GM12878 (cell line): ENCODE measurements at regions of chr4 and their contacts with region 1.

Region 1: DNA sequence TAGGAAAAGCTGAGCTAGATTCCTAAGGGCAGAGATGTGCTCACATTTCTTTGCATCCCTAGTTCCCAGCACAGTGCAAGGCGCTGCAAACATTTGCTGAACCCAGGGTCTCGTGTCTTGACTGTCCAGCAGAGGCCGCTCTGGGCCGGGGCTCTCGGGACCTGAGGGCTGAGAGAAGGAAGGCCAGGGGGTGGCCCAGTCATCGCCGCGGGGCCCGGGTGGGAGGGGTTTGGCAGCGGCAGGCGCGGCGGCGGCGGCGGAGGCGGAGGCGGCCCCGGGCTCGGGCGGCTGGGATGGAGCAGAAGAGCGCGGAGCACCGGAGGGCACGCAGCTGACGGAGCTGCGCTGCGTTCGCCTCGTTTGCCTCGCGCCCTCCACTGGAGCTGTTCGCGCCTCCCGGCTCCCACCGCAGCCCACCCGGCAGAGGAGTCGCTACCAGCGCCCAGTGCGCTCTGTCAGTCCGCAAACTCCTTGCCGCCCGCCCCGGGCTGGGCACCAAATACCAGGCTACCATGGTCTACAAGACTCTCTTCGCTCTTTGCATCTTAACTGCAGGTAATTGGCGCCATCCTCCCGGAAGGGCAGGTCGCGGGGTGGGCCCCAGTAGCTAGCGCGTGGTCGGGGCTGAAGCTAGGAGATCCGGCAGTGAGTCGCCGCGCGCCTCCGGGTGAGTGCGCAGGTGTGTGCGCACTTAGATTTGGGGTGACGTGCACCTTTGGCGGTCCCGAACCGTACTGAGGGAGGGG is at the start of gene PARM1:
- DNase-seq: no peak
- ATAC-seq: peak; percentile 85
- H3K4me3 ChIP-seq: peak within 1 kb of the TSS; percentile 84
- H3K27ac ChIP-seq: peak within 1 kb of the TSS; percentile 46
- H3K4me1 ChIP-seq: peaks cover 10% of the 10 kb centered on the region
- H3K27me3 ChIP-seq: peaks cover 0 to 3% of the 10 kb centered on the region in 2 experiments; a peak in 2 of 4 replicates
- CTCF ChIP-seq: peak; percentile 66 to 87 (median 76); a peak in 4 of 6 replicates
- EP300 ChIP-seq: no peak
- POLR2A ChIP-seq: peak; percentile 87
- RAD21 ChIP-seq: peak; percentile 97
- polyA plus RNA-seq, gene PARM1: 13.9 to 21.8 TPM

Region 2: DNA sequence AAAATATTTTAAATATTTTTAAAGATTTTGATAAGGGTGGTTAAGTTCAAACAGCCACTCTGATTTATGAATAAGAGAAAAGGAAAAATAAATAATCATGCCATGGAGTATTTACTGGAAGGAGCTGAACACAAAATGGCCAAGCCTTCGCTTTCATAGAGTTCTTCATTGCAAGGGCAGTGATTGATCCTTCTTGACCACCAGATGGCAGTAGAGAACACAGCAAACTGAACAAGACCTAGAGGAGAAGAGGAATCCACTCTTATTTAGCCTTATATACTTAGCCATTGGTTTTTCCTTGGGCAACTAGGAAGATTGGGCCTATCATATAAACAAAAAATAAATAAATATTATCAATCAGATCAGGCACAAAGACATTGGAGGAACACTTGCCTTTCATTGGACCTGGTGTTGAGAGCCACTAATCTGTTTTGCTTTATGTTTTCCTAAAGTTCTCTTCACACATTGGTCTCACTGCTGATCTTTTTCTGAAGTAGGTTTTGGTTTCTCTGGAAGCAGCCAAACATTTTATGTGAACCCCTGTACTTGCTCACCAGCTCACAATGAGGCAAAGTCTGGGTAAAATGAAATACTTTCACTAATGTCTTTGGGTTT is 58.1 kb before region 1 on chr4:
- CTCF ChIA-PET with region 1: interaction called, 42 read pairs
- POLR2A ChIA-PET with region 1: interaction called, 3 read pairs
- RAD21 ChIA-PET with region 1: interaction called, 27 read pairs
- SMC1A ChIA-PET with region 1: interaction called, 25 read pairs
- in situ Hi-C with region 1: no loop called
- intact Hi-C with region 1: loop called (anchors 1 kb)
- DNase-seq: peak; percentile 20
- ATAC-seq: peak; percentile 89
- H3K4me3 ChIP-seq: no peak overlapping the region
- H3K27ac ChIP-seq: no peak overlapping the region
- H3K4me1 ChIP-seq: peaks cover 22% of the 10 kb centered on the region
- H3K27me3 ChIP-seq: no peaks in the 10 kb centered on the region
- CTCF ChIP-seq: peak; percentile 78 to 87 (median 84)
- EP300 ChIP-seq: no peak
- POLR2A ChIP-seq: no peak
- RAD21 ChIP-seq: peak; percentile 88

Region 3: GRCh38 chr4:74969507-74970474 is 36.8 kb after region 1 on chr4:
- CTCF ChIA-PET with region 1: interaction called, 3 read pairs
- POLR2A ChIA-PET with region 1: no interaction called
- RAD21 ChIA-PET with region 1: interaction called, 8 read pairs
- SMC1A ChIA-PET with region 1: interaction called, 4 read pairs
- in situ Hi-C with region 1: no loop called
- intact Hi-C with region 1: loop called (anchors 2 kb)
- DNase-seq: no peak
- ATAC-seq: no peak
- H3K4me3 ChIP-seq: no peak overlapping the region
- H3K27ac ChIP-seq: 0 out of 2 replicates have a peak overlapping the region, but pooled peaks have one; percentile 38
- H3K4me1 ChIP-seq: peaks cover 23% of the 10 kb centered on the region
- H3K27me3 ChIP-seq: no peaks in the 10 kb centered on the region
- CTCF ChIP-seq: peak in 2 of 3 experiments; percentile 17 to 19; a peak in 1 of 6 replicates
- EP300 ChIP-seq: no peak
- POLR2A ChIP-seq: no peak
- RAD21 ChIP-seq: no peak

Region 4: DNA sequence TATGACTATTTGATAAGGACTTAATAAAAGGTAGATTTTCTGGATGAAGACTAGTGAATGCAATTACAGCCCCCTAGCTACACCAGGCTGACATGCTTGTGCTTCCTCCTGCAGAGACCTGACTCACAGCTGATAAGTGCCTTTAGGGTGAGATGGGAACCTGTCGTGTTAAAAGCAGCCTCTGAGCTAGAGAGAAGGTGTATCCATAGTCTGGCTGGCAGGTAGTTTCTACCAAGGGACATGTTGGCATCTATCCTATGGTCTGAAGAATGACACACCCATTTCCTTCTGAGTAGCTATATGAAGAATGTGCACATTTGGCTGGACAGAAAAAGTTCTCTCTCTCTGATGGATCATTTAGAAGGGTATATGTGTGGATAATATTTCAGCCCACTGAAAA is 64.0 kb after region 1 on chr4:
- CTCF ChIA-PET with region 1: no interaction called
- POLR2A ChIA-PET with region 1: no interaction called
- RAD21 ChIA-PET with region 1: no interaction called
- SMC1A ChIA-PET with region 1: no interaction called
- in situ Hi-C with region 1: no loop called
- intact Hi-C with region 1: no loop called
- DNase-seq: no peak
- ATAC-seq: 0 out of 3 replicates have a peak, but pooled peaks have one; percentile 30
- H3K4me3 ChIP-seq: no peak overlapping the region
- H3K27ac ChIP-seq: no peak overlapping the region
- H3K4me1 ChIP-seq: no peaks in the 10 kb centered on the region
- H3K27me3 ChIP-seq: no peaks in the 10 kb centered on the region
- CTCF ChIP-seq: no peak
- EP300 ChIP-seq: no peak
- POLR2A ChIP-seq: no peak
- RAD21 ChIP-seq: no peak

Region 5: GRCh38 chr4:75036046-75036830 is 103.2 kb after region 1 on chr4:
- CTCF ChIA-PET with region 1: interaction called, 3 read pairs
- POLR2A ChIA-PET with region 1: interaction called, 3 read pairs
- RAD21 ChIA-PET with region 1: no interaction called
- SMC1A ChIA-PET with region 1: interaction called, 4 read pairs
- in situ Hi-C with region 1: no loop called
- intact Hi-C with region 1: loop called (anchors 5 kb)
- DNase-seq: peak; percentile 23
- ATAC-seq: peak; percentile 59
- H3K4me3 ChIP-seq: no peak overlapping the region
- H3K27ac ChIP-seq: no peak overlapping the region
- H3K4me1 ChIP-seq: peaks cover 6% of the 10 kb centered on the region
- H3K27me3 ChIP-seq: no peaks in the 10 kb centered on the region
- CTCF ChIP-seq: no peak
- EP300 ChIP-seq: no peak
- POLR2A ChIP-seq: no peak
- RAD21 ChIP-seq: no peak

Region 6: GRCh38 chr4:75118739-75119138 is 185.8 kb after region 1 on chr4:
- CTCF ChIA-PET with region 1: interaction called, 17 read pairs
- POLR2A ChIA-PET with region 1: no interaction called
- RAD21 ChIA-PET with region 1: interaction called, 19 read pairs
- SMC1A ChIA-PET with region 1: interaction called, 17 read pairs
- in situ Hi-C with region 1: no loop called
- intact Hi-C with region 1: loop called (anchors 1 kb)
- DNase-seq: no peak
- ATAC-seq: no peak
- H3K4me3 ChIP-seq: no peak overlapping the region
- H3K27ac ChIP-seq: no peak overlapping the region
- H3K4me1 ChIP-seq: no peaks in the 10 kb centered on the region
- H3K27me3 ChIP-seq: no peaks in the 10 kb centered on the region
- CTCF ChIP-seq: no peak
- EP300 ChIP-seq: no peak
- POLR2A ChIP-seq: no peak
- RAD21 ChIP-seq: no peak

Region 7: DNA sequence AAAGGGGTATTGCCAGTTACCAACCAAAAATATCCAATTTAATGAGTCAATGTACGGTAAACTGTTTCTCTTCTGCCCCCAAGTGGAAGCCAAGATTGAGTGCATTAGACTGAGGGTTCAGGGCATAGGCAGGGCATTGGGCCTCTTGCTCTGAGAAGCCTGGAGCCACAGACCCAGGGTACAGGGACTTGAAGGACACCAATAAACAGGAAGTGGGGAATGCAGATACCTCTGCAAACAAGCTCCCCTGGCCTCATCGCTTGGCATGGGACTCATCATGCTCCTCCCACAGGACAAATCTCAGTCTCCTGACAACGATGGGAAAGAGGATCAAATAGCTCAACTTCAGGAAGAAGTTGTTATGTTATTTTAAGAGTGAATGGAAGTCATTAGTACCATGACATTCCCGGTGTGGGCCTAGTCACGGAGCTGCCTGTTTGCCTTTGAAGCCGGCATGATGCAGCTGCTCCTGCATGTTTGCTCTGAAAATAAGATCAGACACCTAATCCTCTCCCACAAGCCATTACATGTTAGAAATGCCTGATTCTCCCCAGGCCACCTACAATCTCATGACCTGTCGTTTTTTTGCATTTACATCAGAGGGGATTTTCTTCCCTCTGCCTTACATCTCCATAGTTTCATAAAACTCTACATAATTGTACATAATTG is 357.1 kb after region 1 on chr4:
- CTCF ChIA-PET with region 1: interaction called, 56 read pairs
- POLR2A ChIA-PET with region 1: no interaction called
- RAD21 ChIA-PET with region 1: interaction called, 37 read pairs
- SMC1A ChIA-PET with region 1: interaction called, 8 read pairs
- in situ Hi-C with region 1: loop called (anchors 5 kb)
- intact Hi-C with region 1: loop called (anchors 1 kb)
- DNase-seq: peak; percentile 23
- ATAC-seq: peak; percentile 98
- H3K4me3 ChIP-seq: no peak overlapping the region
- H3K27ac ChIP-seq: no peak overlapping the region
- H3K4me1 ChIP-seq: no peaks in the 10 kb centered on the region
- H3K27me3 ChIP-seq: no peaks in the 10 kb centered on the region
- CTCF ChIP-seq: peak; percentile 59 to 72 (median 59)
- EP300 ChIP-seq: no peak
- POLR2A ChIP-seq: no peak
- RAD21 ChIP-seq: peak; percentile 90

Region 8: DNA sequence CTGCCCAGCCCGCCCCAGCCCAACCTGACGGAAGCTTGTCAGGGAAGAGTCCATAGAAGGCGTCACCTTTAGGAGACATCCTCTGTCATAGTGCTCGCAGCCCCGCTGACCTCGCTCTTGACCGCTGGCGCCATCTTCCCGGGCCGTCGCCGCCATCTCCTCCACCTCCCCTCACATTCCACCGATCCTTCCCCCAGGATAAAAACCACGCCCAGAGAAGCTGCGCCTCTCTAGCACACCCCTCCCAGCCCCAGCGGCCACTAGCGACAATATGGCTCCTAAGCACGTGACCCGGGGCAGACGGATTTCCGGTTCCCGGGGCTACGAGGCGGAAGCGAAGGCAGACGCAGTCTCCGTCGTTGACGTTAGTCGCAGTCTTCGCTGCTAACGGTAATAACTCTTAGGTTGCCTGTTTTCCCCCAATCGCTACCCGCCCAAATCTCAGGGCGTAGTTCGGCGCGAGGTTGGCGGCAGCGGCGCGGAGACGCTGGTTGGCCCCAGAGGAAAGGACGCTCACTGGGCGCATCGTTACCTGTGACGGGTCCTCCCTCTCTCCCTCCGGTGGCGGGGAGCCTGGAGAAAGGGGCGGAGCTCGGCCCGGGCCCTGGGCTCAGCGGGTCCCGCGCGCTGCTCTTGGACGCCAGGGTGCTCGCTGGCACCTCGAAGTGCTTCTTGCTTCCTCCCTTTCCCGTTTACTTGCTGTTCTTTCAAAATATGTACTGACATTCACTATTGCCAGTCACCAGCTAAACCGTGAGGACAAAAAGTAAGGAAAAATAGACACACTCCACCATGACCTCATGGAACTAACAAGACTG is 581.4 kb after region 1 on chr4 and contains the starts of genes RCHY1 and THAP6:
- CTCF ChIA-PET with region 1: no interaction called
- POLR2A ChIA-PET with region 1: no interaction called
- RAD21 ChIA-PET with region 1: interaction called, 5 read pairs
- SMC1A ChIA-PET with region 1: no interaction called
- in situ Hi-C with region 1: no loop called
- intact Hi-C with region 1: loop called (anchors 2 kb)
- DNase-seq: peak; percentile 78
- ATAC-seq: peak; percentile 91
- H3K4me3 ChIP-seq: peak within 1 kb of the TSS; percentile 98
- H3K27ac ChIP-seq: peak within 1 kb of the TSS; percentile 84
- H3K4me1 ChIP-seq: no peaks in the 10 kb centered on the region
- H3K27me3 ChIP-seq: no peaks in the 10 kb centered on the region
- CTCF ChIP-seq: no peak
- EP300 ChIP-seq: no peak; a peak in 1 of 4 replicates
- POLR2A ChIP-seq: peak; percentile 98
- RAD21 ChIP-seq: no peak
- polyA plus RNA-seq, gene RCHY1: 19.9 to 25.0 TPM
- polyA plus RNA-seq, gene THAP6: 8.9 to 9.4 TPM